Activated naive CD4-positive, alpha-beta T cell treated with anti-CD3 and anti-CD28 coated beads for 36 hours (primary cell): ENCODE measurements at regions of chr7 and their contacts with region 1.

Region 1: DNA sequence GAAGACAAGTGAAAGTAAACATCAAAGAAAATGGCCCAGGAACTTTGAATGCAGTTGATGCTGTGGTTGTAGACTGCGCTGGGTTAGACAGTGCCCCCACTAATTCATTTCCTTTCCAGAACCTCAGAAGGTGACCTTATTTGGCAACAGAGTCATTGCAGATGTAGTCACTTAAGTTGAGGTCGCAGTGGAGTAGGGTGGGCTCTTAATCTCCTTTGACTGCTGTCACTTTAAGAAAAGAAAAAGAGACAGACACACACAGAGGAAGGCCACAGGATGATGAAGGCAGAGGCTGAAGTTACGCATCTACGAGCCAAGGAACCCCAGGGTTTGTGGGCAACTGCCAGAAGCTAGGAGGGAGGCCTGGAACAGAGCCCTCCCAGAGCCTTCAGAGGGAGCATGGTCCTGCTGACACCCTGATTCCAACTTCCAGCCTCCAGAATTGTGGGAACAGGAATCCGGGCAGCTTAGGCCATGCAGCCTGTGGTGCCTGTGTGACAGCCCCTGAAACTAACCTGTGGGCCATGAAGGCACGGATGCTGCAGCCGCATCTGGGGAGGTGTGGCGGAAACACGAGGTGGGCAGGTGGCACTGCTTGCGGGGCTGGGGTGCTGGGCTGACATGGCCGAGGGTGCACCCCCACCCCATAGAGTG is 107.6 kb downstream of the PRKAG2 start:
- DNase-seq: peak; percentile 62
- H3K4me3 Mint-ChIP-seq: peak overlapping the region; percentile 10
- H3K27ac Mint-ChIP-seq: peak overlapping the region; percentile 86
- H3K4me1 Mint-ChIP-seq: peaks cover 51% of the 10 kb centered on the region
- H3K27me3 Mint-ChIP-seq: no peaks in the 10 kb centered on the region

Region 2: GRCh38 chr7:151754142-151754590 is 15.1 kb before region 1 on chr7:
- CTCF ChIA-PET with region 1: interaction called, 57 read pairs
- intact Hi-C with region 1: loop called (anchors 1 kb)
- DNase-seq: peak; percentile 32
- H3K4me3 Mint-ChIP-seq: no peak overlapping the region
- H3K27ac Mint-ChIP-seq: no peak overlapping the region
- H3K4me1 Mint-ChIP-seq: peaks cover 18% of the 10 kb centered on the region
- H3K27me3 Mint-ChIP-seq: no peaks in the 10 kb centered on the region